Left colon (tissue), 2 donors: ENCODE measurements at regions of chr3 and their contacts with region 1.

Region 1: GRCh38 chr3:43540624-43541023 is 81.2 kb downstream of the ANO10 start:
- DNase-seq: no peak
- ATAC-seq: no peak

Region 2: GRCh38 chr3:43155464-43156121 is 385.0 kb before region 1 on chr3:
- intact Hi-C with region 1: no loop called
- DNase-seq: peak; percentile 39 to 52
- ATAC-seq: peak; percentile 94

Region 3: GRCh38 chr3:43866529-43867353 is 326.1 kb after region 1 on chr3:
- intact Hi-C with region 1: no loop called
- DNase-seq: no peak
- ATAC-seq: no peak

Region 4: DNA sequence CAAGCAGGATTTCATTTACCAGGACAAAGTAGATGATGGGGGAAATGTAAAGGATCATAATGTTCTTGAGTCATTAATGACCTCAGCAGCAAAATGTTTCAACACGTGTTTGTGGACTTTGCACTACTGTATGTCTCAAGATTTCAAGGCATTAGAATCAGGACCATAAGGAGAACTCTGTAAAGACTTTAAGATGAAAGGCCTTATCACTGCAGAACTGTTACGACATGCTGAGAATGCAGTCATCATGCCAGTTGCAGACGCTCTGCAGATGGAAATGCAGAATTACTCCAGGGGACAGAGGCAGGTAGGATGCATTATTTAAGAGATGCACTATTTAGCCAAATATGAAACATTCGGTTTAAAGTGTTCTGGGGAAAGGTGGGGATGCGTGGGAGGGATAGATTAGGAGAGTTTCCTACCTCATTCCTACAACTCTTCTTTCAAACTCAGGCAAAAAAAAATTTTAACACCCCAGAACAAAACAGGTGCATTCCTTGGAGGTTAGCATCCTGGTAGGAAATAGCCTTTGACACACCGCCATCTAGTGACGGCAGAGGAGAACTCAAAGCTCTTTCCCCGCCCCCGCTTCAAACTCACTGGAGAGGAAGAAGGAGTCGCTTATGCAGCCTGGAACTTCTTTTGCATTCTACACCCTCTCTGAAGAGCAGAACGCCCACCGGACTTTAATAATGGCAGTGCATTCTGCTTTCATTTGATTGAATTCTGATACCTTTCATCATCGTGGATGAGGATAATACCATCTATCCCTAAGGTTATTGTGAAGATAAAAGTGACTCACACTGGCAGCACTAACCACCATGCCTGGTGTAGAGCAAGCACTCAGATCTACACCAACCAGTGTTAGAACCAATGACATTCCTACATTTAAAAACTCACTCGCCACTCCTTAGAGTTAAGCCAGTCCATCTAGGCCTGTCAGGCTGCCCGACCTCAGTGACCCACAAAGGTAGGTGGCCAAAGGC is 658.0 kb after region 1 on chr3:
- intact Hi-C with region 1: loop called in 1 of 2 experiments (anchors 2 kb)
- DNase-seq: peak; percentile 41 to 65
- ATAC-seq: peak; percentile 90